ENCODE measurements at regions of chr3 and their contacts with region 1.

Region 1: GRCh38 chr3:134212906-134213665 is 37.6 kb downstream of the RYK start:
- DNase-seq: peak; percentile 94
- ATAC-seq: peak; percentile 90
- H3K4me3 Mint-ChIP-seq: no peak overlapping the region
- H3K27ac Mint-ChIP-seq: no peak overlapping the region
- H3K4me1 Mint-ChIP-seq: peaks cover 25% of the 10 kb centered on the region
- H3K27me3 Mint-ChIP-seq: no peaks in the 10 kb centered on the region

Region 2: DNA sequence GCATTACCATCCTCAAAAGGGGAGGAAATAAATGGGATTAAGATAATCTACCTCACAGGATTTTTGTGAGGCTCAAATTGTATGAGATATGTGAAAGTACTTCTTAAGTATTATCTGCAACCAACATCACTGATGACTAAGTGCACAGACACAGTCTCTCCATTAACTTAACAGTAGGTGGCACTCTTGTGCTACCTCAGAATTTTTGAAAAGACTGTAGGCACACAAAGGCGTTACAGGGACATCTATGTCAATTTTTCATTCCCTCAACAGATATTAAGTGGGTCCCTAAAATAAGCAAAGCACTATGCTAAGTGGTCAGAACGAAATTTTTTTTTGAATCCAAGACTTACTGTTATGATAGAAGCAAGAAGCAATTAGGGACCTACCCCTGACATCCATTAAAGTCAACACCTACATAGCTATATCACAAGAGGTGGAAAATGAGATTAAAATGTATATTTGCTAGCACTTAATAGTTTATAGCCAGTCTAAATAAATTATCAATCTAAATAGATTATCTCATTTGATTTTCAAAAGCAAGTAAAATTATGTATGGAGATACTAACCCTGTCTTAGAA is 15.3 kb before region 1 on chr3:
- CTCF ChIA-PET with region 1: interaction called, 36 read pairs
- POLR2A ChIA-PET with region 1: no interaction called
- intact Hi-C with region 1: loop called in 1 of 2 experiments (anchors 1 kb)
- DNase-seq: no peak
- ATAC-seq: peak; percentile 93
- H3K4me3 Mint-ChIP-seq: no peak overlapping the region
- H3K27ac Mint-ChIP-seq: no peak overlapping the region
- H3K4me1 Mint-ChIP-seq: peaks cover 17% of the 10 kb centered on the region
- H3K27me3 Mint-ChIP-seq: no peaks in the 10 kb centered on the region

Region 3: DNA sequence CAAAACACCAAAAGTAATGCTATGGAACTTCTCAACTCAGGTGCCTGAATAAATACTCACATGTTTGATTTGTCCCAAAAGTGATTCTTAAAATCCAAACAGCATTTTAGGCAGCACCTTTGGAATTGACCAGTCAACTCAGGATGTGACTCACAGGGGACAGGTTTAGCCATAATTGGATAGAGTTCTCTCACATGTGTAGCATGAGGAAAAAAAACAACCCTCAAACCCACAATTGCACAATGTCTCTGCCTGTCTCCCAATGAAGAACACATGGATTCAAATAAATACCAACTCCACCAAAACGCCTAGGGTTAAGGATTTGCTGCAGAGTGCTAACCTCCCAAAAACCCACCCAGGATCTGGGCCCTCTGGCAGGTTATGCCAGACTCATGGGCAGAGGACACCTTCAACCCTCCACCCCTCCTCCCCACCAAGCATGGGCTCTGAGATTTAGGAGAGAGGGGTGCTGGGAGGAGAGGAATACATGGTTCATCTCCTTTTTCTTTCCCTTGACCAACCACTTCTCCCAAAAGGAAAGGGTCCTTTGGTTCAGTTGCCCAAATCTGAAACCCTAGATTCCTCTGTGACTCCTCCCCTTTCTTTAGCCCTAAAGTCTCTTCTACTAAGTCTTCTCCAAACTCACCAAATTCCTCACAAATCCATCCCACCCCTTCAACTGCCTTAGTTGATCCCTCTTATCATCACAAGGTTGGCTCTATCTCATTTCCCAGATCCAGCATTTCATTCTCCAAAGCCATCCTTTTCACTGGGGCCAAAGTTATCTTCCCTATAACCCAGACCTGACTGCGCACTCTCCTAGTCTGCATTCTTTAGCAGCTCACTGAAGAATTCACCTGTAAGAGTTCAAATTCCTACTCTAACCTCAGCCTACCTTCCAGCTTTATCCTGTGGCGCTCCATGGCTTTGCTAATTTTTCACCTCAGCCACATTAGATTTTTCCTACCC is 29.8 kb after region 1 on chr3:
- CTCF ChIA-PET with region 1: interaction called, 32 read pairs
- POLR2A ChIA-PET with region 1: no interaction called
- intact Hi-C with region 1: no loop called
- DNase-seq: peak; percentile 20
- ATAC-seq: peak; percentile 51
- H3K4me3 Mint-ChIP-seq: no peak overlapping the region
- H3K27ac Mint-ChIP-seq: no peak overlapping the region
- H3K4me1 Mint-ChIP-seq: peaks cover 88% of the 10 kb centered on the region
- H3K27me3 Mint-ChIP-seq: no peaks in the 10 kb centered on the region

Region 4: GRCh38 chr3:134258761-134259347 is 45.8 kb after region 1 on chr3:
- CTCF ChIA-PET with region 1: interaction called, 18 read pairs
- POLR2A ChIA-PET with region 1: no interaction called
- intact Hi-C with region 1: loop called in 1 of 2 experiments (anchors 5 kb)
- DNase-seq: no peak
- ATAC-seq: no peak
- H3K4me3 Mint-ChIP-seq: no peak overlapping the region
- H3K27ac Mint-ChIP-seq: no peak overlapping the region
- H3K4me1 Mint-ChIP-seq: peaks cover 20% of the 10 kb centered on the region
- H3K27me3 Mint-ChIP-seq: peaks cover 27% of the 10 kb centered on the region

Region 5: DNA sequence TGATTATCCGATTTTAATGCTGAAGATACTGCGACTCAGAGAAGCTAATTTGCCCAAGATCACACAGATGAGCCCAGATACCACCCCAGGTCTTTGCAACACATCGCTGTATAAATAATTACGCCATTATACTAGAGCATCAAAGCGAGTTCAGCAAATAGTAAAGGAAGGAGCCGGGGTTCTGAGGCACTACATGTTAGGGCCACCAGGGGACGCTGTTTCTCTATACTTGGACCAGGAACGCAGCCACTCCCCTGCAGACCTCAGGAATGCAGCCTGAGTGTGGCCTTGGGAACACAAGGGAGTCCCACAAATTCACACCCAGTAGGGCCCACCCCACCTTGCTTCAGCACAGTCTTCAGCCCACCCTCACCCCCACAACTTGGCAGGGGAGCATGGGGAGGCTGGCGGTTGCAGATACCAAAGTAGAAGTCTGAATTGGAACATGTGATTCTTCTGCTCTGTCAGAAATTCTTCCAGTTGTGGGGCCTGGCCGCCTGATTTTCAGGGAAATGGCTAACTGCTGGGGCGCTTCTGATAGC is 95.3 kb after region 1 on chr3:
- CTCF ChIA-PET with region 1: interaction called, 22 read pairs
- POLR2A ChIA-PET with region 1: no interaction called
- intact Hi-C with region 1: loop called in 1 of 2 experiments (anchors 2 kb)
- DNase-seq: peak; percentile 86
- ATAC-seq: peak; percentile 89
- H3K4me3 Mint-ChIP-seq: no peak overlapping the region
- H3K27ac Mint-ChIP-seq: no peak overlapping the region
- H3K4me1 Mint-ChIP-seq: peaks cover 4% of the 10 kb centered on the region
- H3K27me3 Mint-ChIP-seq: peaks cover 32% of the 10 kb centered on the region

Region 6: DNA sequence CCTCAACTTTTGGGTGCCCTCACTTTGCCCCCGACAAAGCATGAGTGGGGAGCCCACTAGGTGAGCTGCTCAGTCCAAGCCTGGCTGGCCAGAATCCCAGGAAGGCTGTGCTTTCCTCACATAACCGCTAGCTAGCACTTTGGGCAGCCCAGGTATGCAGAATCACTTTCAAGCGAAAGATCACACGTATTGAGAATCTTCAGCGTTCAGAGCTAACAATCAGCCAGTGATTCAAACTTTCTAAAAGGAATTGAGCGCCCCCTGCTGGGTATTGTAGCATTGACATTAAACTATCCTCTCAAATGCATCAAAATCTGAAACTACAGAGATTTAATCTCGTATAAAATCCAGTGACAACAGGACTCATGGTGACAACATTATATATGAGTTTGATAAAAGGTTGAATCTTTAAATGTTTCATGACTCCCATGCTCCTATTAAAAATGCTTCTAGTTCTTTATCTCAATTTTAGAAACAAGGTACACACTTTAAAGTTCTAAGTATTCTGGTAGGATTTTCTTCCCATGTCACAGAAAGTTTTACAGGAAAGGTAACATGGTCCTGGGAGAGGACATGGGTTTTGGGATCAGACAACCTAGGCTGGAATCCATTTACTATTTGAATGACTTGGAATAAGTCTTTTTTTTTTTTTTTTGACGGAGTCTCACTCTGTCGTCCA is 260.9 kb after region 1 on chr3:
- CTCF ChIA-PET with region 1: interaction called, 28 read pairs
- POLR2A ChIA-PET with region 1: no interaction called
- intact Hi-C with region 1: loop called (anchors 1 kb)
- DNase-seq: peak; percentile 88
- ATAC-seq: peak; percentile 78
- H3K4me3 Mint-ChIP-seq: no peak overlapping the region
- H3K27ac Mint-ChIP-seq: no peak overlapping the region
- H3K4me1 Mint-ChIP-seq: no peaks in the 10 kb centered on the region
- H3K27me3 Mint-ChIP-seq: no peaks in the 10 kb centered on the region

Region 7: GRCh38 chr3:135905058-135905724 is 1692.1 kb after region 1 on chr3:
- CTCF ChIA-PET with region 1: no interaction called
- POLR2A ChIA-PET with region 1: no interaction called
- intact Hi-C with region 1: no loop called
- DNase-seq: no peak
- ATAC-seq: no peak
- H3K4me3 Mint-ChIP-seq: no peak overlapping the region
- H3K27ac Mint-ChIP-seq: no peak overlapping the region
- H3K4me1 Mint-ChIP-seq: no peaks in the 10 kb centered on the region
- H3K27me3 Mint-ChIP-seq: peaks cover 7% of the 10 kb centered on the region

Measured in activated CD4-positive, alpha-beta T cell treated with anti-CD3 and anti-CD28 coated beads for 36 hours (primary cell).